A549 (cell line): ENCODE measurements at regions of chr3 and their contacts with region 1.

Region 1: DNA sequence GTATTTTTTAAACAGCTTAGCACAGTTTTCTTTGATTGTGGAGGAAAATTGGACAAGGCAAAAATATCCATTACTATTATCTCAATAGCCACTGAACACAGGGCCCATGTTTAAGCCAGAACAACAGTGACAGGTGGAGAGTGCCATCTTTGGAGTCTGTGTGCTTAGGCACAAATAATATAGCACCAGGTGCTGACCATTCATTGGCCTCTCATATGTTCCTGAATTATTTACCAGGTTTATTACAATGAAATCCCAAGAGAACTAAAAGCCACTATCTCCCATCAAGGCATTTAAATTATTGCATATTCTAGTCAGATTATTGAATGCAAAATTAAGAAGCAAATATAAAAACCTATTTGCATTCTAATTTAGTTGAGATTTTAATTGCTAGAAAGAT is 39.6 kb downstream of the GPR156 start:
- DNase-seq: no peak
- ATAC-seq: no peak
- H3K4me3 ChIP-seq: no peak overlapping the region
- H3K27ac ChIP-seq: no peak overlapping the region
- H3K4me1 ChIP-seq: no peaks in the 10 kb centered on the region
- CTCF ChIP-seq: no peak
- EP300 ChIP-seq: no peak
- POLR2A ChIP-seq: no peak
- RAD21 ChIP-seq: no peak

Region 2: DNA sequence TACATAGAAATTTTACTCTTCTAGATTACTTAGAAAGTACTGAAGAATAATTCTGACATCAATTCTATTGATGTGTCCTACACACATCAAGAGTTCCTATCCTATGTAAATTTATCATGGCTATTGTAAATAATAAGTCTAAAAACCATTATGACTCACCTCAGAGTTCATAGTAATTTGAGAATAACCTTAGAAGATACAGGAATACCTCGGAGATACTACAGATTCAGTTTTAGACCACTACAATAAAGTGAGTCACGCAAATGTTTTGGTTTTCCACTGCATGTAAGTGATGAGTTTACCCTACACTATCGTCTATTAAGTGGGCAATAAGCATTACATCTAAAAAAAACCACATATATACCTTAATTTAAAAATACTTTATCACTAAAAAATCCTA is 388.7 kb before region 1 on chr3:
- CTCF ChIA-PET with region 1: no interaction called
- POLR2A ChIA-PET with region 1: no interaction called
- DNase-seq: no peak
- ATAC-seq: no peak
- H3K4me3 ChIP-seq: no peak overlapping the region
- H3K27ac ChIP-seq: no peak overlapping the region
- H3K4me1 ChIP-seq: no peaks in the 10 kb centered on the region
- CTCF ChIP-seq: no peak
- EP300 ChIP-seq: no peak
- POLR2A ChIP-seq: no peak
- RAD21 ChIP-seq: no peak

Region 3: GRCh38 chr3:120227710-120228347 is 17.6 kb before region 1 on chr3:
- CTCF ChIA-PET with region 1: interaction called, 12 read pairs
- POLR2A ChIA-PET with region 1: no interaction called
- DNase-seq: no peak
- ATAC-seq: no peak
- H3K4me3 ChIP-seq: no peak overlapping the region
- H3K27ac ChIP-seq: no peak overlapping the region
- H3K4me1 ChIP-seq: no peaks in the 10 kb centered on the region
- CTCF ChIP-seq: no peak
- EP300 ChIP-seq: no peak
- POLR2A ChIP-seq: no peak
- RAD21 ChIP-seq: no peak

Region 4: DNA sequence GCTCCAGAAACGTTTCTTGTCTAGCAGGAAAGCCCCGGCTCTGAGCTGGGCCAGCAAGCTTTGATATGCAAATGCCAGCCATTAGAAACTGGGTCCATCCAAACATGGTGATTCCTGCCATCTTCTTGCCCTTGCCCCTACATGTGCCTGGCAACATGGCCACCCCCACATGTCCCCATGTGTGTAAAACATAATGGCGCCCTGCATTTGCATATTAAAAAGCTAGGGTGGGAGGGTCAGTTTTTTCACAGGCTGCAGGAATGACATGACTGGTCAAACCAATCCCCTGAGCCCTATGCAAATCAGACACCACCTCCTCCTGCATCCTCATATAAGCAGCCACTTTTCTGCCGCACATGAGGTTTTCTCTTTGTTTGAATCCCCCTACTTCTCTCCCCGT is 18.4 kb after region 1 on chr3:
- CTCF ChIA-PET with region 1: interaction called, 10 read pairs
- POLR2A ChIA-PET with region 1: no interaction called
- DNase-seq: no peak
- ATAC-seq: no peak
- H3K4me3 ChIP-seq: no peak overlapping the region
- H3K27ac ChIP-seq: no peak overlapping the region
- H3K4me1 ChIP-seq: no peaks in the 10 kb centered on the region
- CTCF ChIP-seq: no peak
- EP300 ChIP-seq: no peak
- POLR2A ChIP-seq: no peak
- RAD21 ChIP-seq: no peak

Region 5: DNA sequence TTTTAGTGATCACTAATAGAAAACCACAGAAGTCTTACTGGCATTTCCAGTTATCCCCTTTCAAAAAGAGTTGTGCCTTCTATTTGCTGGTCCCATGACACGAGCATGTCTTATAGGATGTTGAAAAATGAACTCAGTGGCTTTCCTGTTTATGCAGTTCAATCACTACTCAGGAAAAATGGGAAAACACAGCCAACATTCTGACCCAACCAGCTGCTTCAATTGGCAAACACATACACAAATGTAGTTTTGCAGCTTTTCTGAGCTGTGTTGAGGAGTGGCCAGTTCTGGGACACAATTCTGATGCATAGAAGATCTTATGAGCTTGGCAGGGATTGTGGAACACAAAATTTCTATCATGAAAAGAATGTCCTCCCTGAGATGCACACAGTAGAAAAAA is 165.2 kb after region 1 on chr3:
- CTCF ChIA-PET with region 1: interaction called, 121 read pairs
- POLR2A ChIA-PET with region 1: no interaction called
- DNase-seq: no peak
- ATAC-seq: no peak
- H3K4me3 ChIP-seq: no peak overlapping the region
- H3K27ac ChIP-seq: no peak overlapping the region
- H3K4me1 ChIP-seq: no peaks in the 10 kb centered on the region
- CTCF ChIP-seq: no peak
- EP300 ChIP-seq: no peak
- POLR2A ChIP-seq: no peak
- RAD21 ChIP-seq: no peak

Region 6: DNA sequence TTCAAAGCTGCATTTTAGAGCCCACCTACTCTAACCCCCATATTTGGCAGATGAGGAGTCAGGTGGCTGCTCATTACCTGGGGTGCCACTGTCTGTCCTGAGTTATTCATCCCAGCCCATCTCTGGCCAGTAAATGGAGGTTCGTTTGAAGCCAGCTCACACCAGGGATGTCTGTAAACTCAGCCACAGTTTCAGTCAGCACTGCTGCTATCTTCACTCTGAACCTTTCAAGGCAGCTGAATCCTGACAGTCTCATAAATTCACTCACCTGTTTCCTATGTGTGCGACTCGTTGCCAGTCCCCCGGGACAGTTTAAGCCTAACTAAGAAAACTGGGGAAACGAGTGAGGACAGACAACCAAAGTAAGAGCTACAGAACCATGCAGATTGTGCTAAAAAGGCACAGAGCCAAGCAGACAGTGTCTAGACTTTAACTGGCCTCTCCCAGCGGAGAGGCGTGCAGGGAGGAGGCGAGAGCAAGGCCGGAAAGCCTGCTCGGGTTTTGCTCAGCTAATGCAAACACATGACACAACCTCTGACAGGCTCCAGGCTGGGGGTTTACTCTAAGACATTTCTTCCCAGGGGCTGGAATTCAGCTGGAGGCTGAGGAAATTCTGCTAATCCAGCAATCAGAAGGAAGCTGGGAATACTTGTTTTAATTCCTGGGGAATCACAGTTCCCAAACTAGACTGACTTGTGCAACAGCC is 193.4 kb after region 1 on chr3:
- CTCF ChIA-PET with region 1: interaction called, 11 read pairs
- POLR2A ChIA-PET with region 1: no interaction called
- DNase-seq: peak in 1 of 2 experiments; percentile 58
- ATAC-seq: peak; percentile 69 to 81; a peak in 5 of 6 replicates
- H3K4me3 ChIP-seq: no peak overlapping the region
- H3K27ac ChIP-seq: peak overlapping the region; percentile 78 to 83
- H3K4me1 ChIP-seq: peaks cover 68% of the 10 kb centered on the region
- CTCF ChIP-seq: no peak
- EP300 ChIP-seq: no peak; a peak in 1 of 5 replicates
- POLR2A ChIP-seq: no peak
- RAD21 ChIP-seq: no peak

Region 7: DNA sequence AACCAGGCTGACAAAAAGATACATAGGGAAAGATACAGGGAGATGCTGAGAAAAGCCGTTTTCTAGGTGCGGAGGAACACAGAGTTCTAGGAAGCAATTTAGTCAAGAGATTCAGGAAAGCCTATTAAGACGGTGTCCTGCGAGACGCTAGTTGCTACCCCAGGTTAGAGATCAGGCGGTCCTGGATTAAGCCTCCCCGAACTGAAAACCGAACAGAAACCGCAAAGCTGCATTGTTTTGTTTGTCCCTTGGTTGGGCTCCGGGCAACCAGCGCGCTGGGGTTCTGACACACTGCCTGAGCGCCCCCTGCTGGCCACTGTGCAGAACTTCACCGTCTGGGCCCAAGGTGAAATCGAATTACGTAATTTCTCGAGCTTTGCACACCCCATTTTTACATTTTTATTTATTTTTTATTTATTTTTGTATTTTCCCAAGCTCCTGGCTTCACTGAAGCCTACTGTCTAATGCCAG is 313.4 kb after region 1 on chr3:
- CTCF ChIA-PET with region 1: interaction called, 65 read pairs
- POLR2A ChIA-PET with region 1: no interaction called
- DNase-seq: peak; percentile 78 to 84
- ATAC-seq: peak; percentile 58 to 84
- H3K4me3 ChIP-seq: peak overlapping the region; percentile 54
- H3K27ac ChIP-seq: peak overlapping the region; percentile 61 to 76
- H3K4me1 ChIP-seq: peaks cover 12% of the 10 kb centered on the region
- CTCF ChIP-seq: peak; percentile 96
- EP300 ChIP-seq: no peak
- POLR2A ChIP-seq: no peak
- RAD21 ChIP-seq: peak; percentile 90 to 96